ENCODE measurements at regions of chr2 and their contacts with region 1.

Region 1: GRCh38 chr2:217943446-217944389 is 59.1 kb downstream of the TNS1 start:
- DNase-seq: peak in 1 of 2 experiments; percentile 83
- H3K4me3 ChIP-seq: 0 out of 8 replicates have a peak overlapping the region, but pooled peaks of 1 of the 4 experiments have one; percentile 10
- H3K27ac ChIP-seq: no peak overlapping the region
- H3K4me1 ChIP-seq: peaks cover 3 to 16% (median 9%) of the 10 kb centered on the region in 4 experiments
- H3K27me3 ChIP-seq: no peaks in the 10 kb centered on the region
- CTCF ChIP-seq: peak; percentile 27 to 43 (median 34); a peak in 3 of 4 replicates
- EP300 ChIP-seq: no peak
- POLR2A ChIP-seq: peak in 1 of 2 experiments; percentile 26; a peak in 1 of 3 replicates
- RAD21 ChIP-seq: peak; percentile 43 to 61; a peak in 3 of 4 replicates

Region 2: GRCh38 chr2:217880287-217880889 is 63.3 kb before region 1 on chr2:
- CTCF ChIA-PET with region 1: interaction called, 15 read pairs
- POLR2A ChIA-PET with region 1: interaction called, 3 read pairs
- DNase-seq: no peak
- H3K4me3 ChIP-seq: no peak overlapping the region
- H3K27ac ChIP-seq: no peak overlapping the region
- H3K4me1 ChIP-seq: peaks cover 0 to 9% (median under 1%) of the 10 kb centered on the region in 4 experiments; a peak in 4 of 7 replicates
- H3K27me3 ChIP-seq: no peaks in the 10 kb centered on the region
- CTCF ChIP-seq: peak in 1 of 3 experiments; percentile 18; a peak in 1 of 4 replicates
- EP300 ChIP-seq: no peak
- POLR2A ChIP-seq: no peak
- RAD21 ChIP-seq: no peak

Region 3: DNA sequence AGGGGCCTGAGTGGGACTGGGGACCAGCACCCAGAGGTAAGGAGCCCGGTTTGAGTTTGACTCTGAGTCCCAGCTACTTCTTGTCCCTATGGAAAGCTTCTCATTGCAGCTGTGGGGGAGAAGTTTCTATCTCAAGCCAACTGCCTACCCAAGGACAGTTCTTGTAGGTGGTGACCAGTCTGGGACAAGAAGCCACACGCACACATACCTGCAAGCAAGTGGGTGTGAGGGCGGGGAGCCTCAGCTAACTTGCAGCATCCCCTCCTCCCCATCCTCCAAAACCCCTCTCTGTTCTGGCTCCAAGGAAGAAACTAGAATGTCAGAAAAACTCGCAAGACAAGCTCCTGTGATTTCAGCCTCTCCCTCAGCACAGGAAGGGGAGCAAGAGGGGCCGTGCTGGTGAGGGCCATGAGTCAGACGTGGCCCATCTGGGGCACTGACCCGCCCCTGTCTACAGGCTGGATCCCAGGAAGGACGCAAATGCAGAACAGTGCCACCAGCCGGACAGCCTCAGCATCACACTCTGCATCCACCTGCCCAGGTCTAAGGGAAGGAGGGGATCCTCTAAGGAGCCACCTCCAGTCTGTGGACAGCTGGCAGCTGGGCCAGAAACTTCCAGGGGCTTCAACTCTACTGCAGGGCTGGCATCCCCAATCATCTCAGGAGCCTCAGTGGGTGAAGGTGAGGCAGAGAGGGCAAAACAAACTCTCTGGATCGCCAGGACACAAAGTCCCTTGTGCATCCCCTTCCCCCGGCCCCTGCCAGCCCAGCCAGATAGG is 44.3 kb before region 1 on chr2:
- CTCF ChIA-PET with region 1: interaction called, 26 read pairs
- POLR2A ChIA-PET with region 1: no interaction called
- DNase-seq: peak; percentile 71 to 93
- H3K4me3 ChIP-seq: no peak overlapping the region
- H3K27ac ChIP-seq: no peak overlapping the region
- H3K4me1 ChIP-seq: peaks cover 0 to 4% (median 2%) of the 10 kb centered on the region in 4 experiments; a peak in 4 of 7 replicates
- H3K27me3 ChIP-seq: no peaks in the 10 kb centered on the region; a peak in 1 of 7 replicates
- CTCF ChIP-seq: peak; percentile 79 to 98 (median 90)
- EP300 ChIP-seq: no peak
- POLR2A ChIP-seq: no peak
- RAD21 ChIP-seq: peak; percentile 51 to 62

Region 4: DNA sequence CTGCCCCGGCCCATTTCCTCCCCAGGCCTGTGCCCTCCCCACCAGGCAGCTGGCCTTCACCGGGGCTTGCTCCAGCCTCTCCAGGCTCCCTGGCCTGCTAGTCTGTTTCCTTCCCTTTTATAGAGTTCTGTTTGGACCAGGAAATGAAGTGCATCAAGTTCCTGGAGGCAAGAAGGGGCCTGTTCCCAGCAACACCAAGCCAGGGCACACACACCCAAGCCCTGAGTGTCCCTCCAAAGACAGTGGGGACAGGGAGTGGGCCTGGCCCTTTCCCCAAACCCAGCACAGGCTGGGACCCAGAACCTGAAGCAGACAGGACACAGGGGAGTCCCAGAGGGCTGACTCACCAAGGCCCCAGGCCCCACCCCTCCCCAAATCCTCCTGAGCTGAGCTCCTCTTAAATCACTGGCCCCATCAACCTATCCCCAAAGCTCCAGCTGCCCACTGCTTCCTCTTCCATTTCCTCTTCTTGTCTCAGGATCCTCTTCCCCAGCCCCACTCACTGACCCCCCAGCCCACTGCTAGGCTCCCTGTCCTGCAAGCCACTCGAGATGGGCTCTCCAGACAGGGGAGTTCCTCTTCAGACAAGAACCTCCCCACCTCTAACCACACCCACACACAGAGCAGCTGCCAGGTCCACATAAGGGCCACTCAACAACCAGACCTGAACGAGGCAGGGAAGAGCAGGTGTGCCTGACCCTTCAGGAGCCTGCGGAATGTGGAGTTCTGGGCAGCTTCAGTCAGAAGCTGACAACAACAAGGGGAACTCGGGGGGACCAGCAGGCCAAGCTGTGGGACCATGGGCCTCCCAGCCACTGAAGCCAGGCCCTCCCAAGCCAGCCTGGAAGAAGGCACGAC is 15.2 kb before region 1 on chr2:
- CTCF ChIA-PET with region 1: interaction called, 83 read pairs
- POLR2A ChIA-PET with region 1: interaction called, 7 read pairs
- DNase-seq: no peak
- H3K4me3 ChIP-seq: no peak overlapping the region
- H3K27ac ChIP-seq: no peak overlapping the region; the same call in 1 of the 2 replicates
- H3K4me1 ChIP-seq: peaks cover 0 to 12% (median 4%) of the 10 kb centered on the region in 4 experiments; a peak in 2 of 7 replicates
- H3K27me3 ChIP-seq: no peaks in the 10 kb centered on the region
- CTCF ChIP-seq: no peak
- EP300 ChIP-seq: no peak
- POLR2A ChIP-seq: no peak
- RAD21 ChIP-seq: no peak

Region 5: DNA sequence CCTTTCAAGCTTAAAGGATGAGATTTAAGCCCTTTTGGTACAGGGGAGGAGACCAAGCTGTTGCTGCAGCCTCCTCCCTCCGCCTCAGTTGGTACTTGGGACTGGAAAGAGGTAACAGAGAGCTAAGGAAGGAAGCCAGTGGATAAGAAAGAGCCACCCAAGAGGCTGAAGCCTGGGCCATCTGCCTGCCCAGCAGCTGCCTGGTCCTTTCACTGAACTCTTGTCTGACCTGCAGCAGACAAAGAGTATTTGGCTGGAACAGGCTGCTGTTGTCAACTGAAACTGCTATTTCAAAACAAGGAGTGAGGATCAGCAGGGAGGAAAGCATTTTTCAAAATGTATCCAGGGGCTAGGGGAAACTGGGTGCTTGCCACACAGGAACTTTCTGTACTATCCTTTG is 28.8 kb after region 1 on chr2:
- CTCF ChIA-PET with region 1: interaction called, 52 read pairs
- POLR2A ChIA-PET with region 1: interaction called, 3 read pairs
- DNase-seq: no peak
- H3K4me3 ChIP-seq: no peak overlapping the region
- H3K27ac ChIP-seq: no peak overlapping the region
- H3K4me1 ChIP-seq: no peaks in the 10 kb centered on the region
- H3K27me3 ChIP-seq: peaks cover 0 to 13% (median 8%) of the 10 kb centered on the region in 4 experiments; a peak in 4 of 7 replicates
- CTCF ChIP-seq: no peak
- EP300 ChIP-seq: no peak
- POLR2A ChIP-seq: no peak
- RAD21 ChIP-seq: no peak